Activated T-helper 1 cell treated with anti-CD3 and anti-CD28 coated beads, Interleukin-12 subunit alpha, Interleukin-12 subunit beta, Interleukin-2, Interleukin-4 antibody, amounts not matched to agents 30 ng/mL and 10 ng/mL and 1 ng/mL, durations not matched to agents 14 hours and 24 hours and 36 hours (primary cell): ENCODE measurements at regions of chr9 and their contacts with region 1.

Region 1: GRCh38 chr9:15824310-15824709 is 271.5 kb downstream of the CCDC171 start:
- DNase-seq: no peak
- H3K4me3 Mint-ChIP-seq: no peak overlapping the region
- H3K27ac Mint-ChIP-seq: no peak overlapping the region
- H3K4me1 Mint-ChIP-seq: no peaks in the 10 kb centered on the region
- H3K27me3 Mint-ChIP-seq: no peaks in the 10 kb centered on the region

Region 2: DNA sequence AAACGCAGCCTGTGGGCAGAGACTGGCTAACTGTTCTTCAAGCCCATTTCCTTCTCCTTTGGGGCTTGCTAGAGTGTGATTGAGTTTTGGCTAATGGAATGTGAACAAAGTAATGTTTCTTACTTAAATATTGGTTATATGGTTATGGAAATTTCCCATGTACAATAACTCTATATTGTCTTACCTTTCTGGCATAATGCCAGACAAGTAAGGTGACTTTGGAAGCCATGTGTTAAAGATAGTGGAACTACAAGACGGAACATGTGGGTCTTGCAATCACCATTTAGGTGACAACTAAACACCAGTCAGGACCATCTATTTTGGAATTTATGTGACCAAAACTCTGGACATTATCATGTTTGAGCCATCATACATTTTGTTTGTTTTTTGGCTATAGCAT is 11.2 kb before region 1 on chr9:
- intact Hi-C with region 1: loop called (anchors 1 kb)
- DNase-seq: no peak
- H3K4me3 Mint-ChIP-seq: no peak overlapping the region
- H3K27ac Mint-ChIP-seq: no peak overlapping the region
- H3K4me1 Mint-ChIP-seq: no peaks in the 10 kb centered on the region
- H3K27me3 Mint-ChIP-seq: no peaks in the 10 kb centered on the region